GM13977 (cell line): ENCODE measurements at regions of chr5 and their contacts with region 1.

Region 1: DNA sequence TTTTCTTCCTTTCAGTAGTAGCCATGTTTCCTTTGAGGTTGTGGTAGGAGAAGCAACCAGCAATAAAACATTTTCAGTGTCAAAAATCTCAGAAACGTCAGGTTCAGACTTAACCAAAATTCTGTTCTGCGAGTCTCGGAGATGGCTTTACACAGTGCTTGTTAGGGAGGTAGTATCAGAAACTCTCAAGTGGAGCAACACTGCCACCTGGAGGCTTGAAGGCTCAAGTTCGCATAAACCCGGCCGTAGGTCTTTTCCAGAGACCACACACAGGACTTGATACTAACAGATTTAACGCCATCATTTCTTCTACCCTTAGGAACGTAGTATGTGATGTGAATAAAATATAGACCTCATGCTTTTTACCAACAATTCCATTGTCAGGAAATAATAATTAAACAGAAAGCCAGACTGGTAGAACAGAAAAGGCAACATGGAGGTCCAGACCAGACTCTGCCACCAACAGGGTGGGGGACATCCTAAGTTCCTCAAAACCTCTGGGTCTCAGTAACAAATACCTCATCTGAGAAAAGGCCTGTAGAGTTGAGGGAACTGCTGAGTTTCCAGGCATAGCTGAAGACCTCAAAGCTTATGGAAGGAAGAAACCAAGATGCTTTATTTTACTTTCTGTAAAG is 8.5 kb downstream of the PTGER4 start:
- DNase-seq: peak; percentile 72
- CTCF ChIP-seq: peak; percentile 82

Region 2: DNA sequence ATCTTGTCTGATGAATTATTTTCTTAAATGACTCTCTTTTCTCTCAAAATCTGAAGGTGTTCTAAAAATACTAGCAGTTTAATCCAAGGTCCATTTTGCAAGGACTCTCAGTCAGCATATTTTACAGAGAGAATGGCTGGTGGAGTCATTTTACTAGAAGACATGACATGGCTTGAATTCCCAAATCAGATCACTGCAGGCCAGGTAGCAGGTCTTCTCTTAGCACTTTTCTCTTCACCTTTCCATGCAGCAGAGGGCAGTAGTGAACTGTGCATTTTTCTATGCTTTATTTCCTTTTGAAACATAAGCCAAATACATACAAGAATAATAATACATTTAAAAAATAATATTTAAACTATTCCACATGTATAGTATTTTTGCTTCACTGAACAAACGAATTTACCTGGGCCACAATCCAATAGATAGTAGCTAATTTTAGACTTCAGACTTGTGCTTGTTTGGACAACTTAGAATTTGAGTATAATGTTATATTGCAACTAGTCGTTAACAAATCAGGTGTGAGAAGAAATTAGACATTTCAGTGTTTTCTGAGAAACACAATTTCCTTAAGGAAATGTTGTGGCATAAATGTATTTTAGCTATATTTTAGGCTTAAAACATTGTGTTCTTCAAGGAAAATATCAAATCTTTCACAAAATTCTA is 974.1 kb before region 1 on chr5:
- in situ Hi-C with region 1: loop called (anchors 25 kb)
- DNase-seq: peak; percentile 28
- CTCF ChIP-seq: peak; percentile 68

Region 3: DNA sequence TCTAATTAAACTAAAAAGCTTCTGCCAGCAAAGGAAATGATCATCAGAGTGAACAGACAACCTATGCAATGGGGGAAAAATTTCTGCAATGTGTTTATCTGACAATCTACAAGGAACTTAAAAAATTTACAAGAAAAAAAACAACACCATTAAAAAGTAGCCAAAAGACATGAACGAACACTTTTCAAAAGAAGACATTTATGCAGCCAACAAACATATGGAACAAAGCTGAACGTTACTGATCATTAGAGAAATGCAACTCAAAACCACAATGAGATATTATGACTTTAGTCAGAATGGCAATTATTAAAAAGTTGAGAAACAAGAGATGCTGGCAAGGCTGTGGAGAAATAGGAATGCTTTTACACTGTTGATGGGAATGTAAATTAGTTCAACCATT is 733.1 kb before region 1 on chr5:
- in situ Hi-C with region 1: loop called (anchors 10 kb)
- DNase-seq: no peak
- CTCF ChIP-seq: no peak

Region 4: GRCh38 chr5:40587284-40587882 is 100.9 kb before region 1 on chr5:
- in situ Hi-C with region 1: no loop called
- DNase-seq: no peak
- CTCF ChIP-seq: no peak

Region 5: GRCh38 chr5:40962208-40962955 is 274.1 kb after region 1 on chr5:
- in situ Hi-C with region 1: no loop called
- DNase-seq: no peak
- CTCF ChIP-seq: no peak

Region 6: DNA sequence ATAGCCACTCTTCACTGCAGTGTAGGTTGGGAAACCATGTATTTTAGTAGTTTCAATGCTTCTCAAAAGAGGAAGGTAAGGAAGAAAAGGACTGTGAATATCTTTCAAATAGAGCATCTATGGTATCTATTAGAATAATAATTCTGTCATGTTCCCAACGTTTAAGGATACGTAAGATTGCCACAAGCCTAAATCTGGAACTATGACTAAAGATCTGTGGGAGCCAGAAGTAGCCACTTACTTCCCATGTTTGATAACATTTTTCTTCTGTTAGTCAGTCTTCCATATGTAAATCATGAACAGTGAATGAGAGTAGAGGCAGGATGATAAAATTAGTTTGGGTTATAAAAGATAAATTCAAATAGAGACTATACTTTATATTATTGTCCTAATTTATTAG is 399.2 kb after region 1 on chr5:
- in situ Hi-C with region 1: no loop called
- DNase-seq: no peak
- CTCF ChIP-seq: no peak